CD4-positive, alpha-beta T cell (primary cell): ENCODE measurements at regions of chr1 and their contacts with region 1.

Region 1: GRCh38 chr1:67430352-67431155 is at the start of gene SERBP1:
- DNase-seq: peak; percentile 89 to 99 (median 94)
- ATAC-seq: peak; percentile 86
- H3K4me3 ChIP-seq: peak within 1 kb of the TSS; percentile 97
- H3K4me3 Mint-ChIP-seq: peak within 1 kb of the TSS; percentile 97
- H3K27ac ChIP-seq: peak within 1 kb of the TSS; percentile 97 to 98
- H3K27ac Mint-ChIP-seq: peak within 1 kb of the TSS; percentile 94
- H3K4me1 ChIP-seq: peaks cover 11% of the 10 kb centered on the region
- H3K4me1 Mint-ChIP-seq: peaks cover 59% of the 10 kb centered on the region
- H3K27me3 ChIP-seq: no peaks in the 10 kb centered on the region
- H3K27me3 Mint-ChIP-seq: no peaks in the 10 kb centered on the region
- CTCF ChIP-seq: no peak
- total RNA-seq, gene SERBP1: 128 to 135 TPM

Region 2: GRCh38 chr1:66924756-66925557 is 505.6 kb before region 1 on chr1 and contains the starts of genes DNAI4 and MIER1:
- CTCF ChIA-PET with region 1: no interaction called
- POLR2A ChIA-PET with region 1: interaction called, 15 read pairs
- intact Hi-C with region 1: loop called (anchors 2 to 5 kb)
- DNase-seq: peak; percentile 90 to 99 (median 95)
- ATAC-seq: peak; percentile 89
- H3K4me3 ChIP-seq: peak within 1 kb of the TSS; percentile 92
- H3K4me3 Mint-ChIP-seq: peak within 1 kb of the TSS; percentile 97
- H3K27ac ChIP-seq: peak within 1 kb of the TSS; percentile 95 to 99
- H3K27ac Mint-ChIP-seq: peak within 1 kb of the TSS; percentile 98
- H3K4me1 ChIP-seq: peaks cover 24% of the 10 kb centered on the region
- H3K4me1 Mint-ChIP-seq: peaks cover 67% of the 10 kb centered on the region
- H3K27me3 ChIP-seq: no peaks in the 10 kb centered on the region
- H3K27me3 Mint-ChIP-seq: no peaks in the 10 kb centered on the region
- CTCF ChIP-seq: no peak
- total RNA-seq, gene DNAI4: 5.0 to 8.8 TPM
- total RNA-seq, gene MIER1: 106 to 107 TPM

Region 3: DNA sequence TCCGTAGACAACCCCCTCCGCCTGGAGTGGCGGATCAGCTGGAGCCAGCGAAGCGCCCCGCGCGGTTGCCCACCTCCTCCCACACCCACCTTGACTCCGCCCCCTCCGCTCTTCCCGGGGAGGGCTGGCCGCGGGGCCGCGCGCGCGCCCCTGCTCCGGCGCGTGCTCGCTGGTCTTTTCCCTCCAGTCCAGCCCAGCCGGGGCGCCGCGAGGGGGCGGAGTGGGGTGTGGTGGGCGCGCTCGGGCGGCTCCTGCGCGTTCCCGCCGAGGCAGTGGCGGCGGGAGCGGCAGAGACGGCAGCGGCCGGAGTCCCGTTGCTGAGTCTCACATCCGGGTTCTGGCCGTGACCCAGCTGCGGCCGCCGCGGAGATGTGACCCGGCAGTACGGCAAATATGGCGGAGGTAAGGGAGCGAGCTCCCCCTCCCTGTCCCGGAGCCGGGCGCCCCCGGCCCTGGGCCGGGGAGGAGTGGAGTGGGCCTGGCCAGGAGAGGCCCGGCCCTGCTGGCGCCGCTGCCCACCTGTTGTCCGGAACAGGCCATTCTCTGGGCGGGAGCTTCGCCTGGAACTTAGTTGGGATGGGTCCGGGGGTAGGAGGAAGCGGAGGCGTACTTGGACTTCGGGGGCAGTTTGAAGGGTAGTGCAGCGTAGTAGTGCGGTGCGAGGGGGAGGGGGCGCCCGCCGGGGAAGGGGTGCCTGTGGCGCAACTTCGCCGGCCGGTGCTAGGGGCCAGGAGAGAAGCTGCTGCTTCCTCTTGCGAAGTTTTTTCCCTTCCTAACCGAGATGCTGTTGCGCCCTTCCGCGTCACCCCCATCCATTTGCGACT is 500.3 kb before region 1 on chr1:
- CTCF ChIA-PET with region 1: no interaction called
- POLR2A ChIA-PET with region 1: interaction called, 15 read pairs
- intact Hi-C with region 1: loop called (anchors 2 to 5 kb)
- DNase-seq: peak; percentile 88 to 98 (median 94)
- ATAC-seq: peak; percentile 66
- H3K4me3 ChIP-seq: peak overlapping the region; percentile 93
- H3K4me3 Mint-ChIP-seq: peak overlapping the region; percentile 91
- H3K27ac ChIP-seq: peak overlapping the region; percentile 87 to 88
- H3K27ac Mint-ChIP-seq: peak overlapping the region; percentile 84
- H3K4me1 ChIP-seq: peaks cover 18% of the 10 kb centered on the region
- H3K4me1 Mint-ChIP-seq: peaks cover 74% of the 10 kb centered on the region
- H3K27me3 ChIP-seq: no peaks in the 10 kb centered on the region
- H3K27me3 Mint-ChIP-seq: no peaks in the 10 kb centered on the region
- CTCF ChIP-seq: peak; percentile 52

Region 4: DNA sequence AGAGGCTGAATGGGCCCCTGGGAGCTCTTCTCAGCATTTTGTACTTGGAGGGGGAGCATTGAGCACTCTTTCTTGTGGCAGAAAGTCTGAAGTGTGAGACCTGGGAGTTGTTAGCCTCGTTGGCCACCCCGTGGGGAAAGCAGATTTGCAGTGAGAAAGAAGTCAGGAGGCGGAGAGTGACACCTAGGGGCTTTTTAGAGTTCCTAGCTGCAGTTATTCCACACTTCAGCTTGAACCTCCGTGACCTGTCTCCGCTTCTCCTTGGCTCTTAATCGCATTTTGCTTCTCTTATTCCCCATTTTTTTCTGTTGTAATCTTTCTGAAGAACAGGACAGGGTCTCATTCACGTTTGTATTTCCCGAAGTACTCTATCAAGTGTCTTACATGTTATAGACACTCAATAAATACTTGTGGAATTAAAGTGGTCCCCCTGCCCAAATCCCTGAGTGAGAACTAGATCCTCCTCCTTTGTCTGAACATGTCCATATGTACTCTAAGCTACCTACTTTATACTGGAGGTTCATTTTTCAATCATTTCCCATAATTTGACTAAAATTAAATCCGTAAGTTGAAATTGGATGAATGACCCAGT is 281.3 kb before region 1 on chr1:
- CTCF ChIA-PET with region 1: no interaction called
- POLR2A ChIA-PET with region 1: no interaction called
- intact Hi-C with region 1: loop called in 1 of 2 experiments (anchors 10 kb)
- DNase-seq: peak; percentile 32 to 83 (median 56)
- ATAC-seq: peak; percentile 93
- H3K4me3 ChIP-seq: no peak overlapping the region
- H3K4me3 Mint-ChIP-seq: no peak overlapping the region
- H3K27ac ChIP-seq: no peak overlapping the region
- H3K27ac Mint-ChIP-seq: no peak overlapping the region
- H3K4me1 ChIP-seq: peaks cover 9% of the 10 kb centered on the region
- H3K4me1 Mint-ChIP-seq: peaks cover 31% of the 10 kb centered on the region
- H3K27me3 ChIP-seq: no peaks in the 10 kb centered on the region
- H3K27me3 Mint-ChIP-seq: no peaks in the 10 kb centered on the region
- CTCF ChIP-seq: peak; percentile 85

Region 5: GRCh38 chr1:67407498-67407897 is 23.1 kb before region 1 on chr1:
- CTCF ChIA-PET with region 1: no interaction called
- POLR2A ChIA-PET with region 1: interaction called, 6 read pairs
- intact Hi-C with region 1: loop called in 1 of 2 experiments (anchors 2 kb)
- DNase-seq: no peak
- ATAC-seq: no peak
- H3K4me3 ChIP-seq: no peak overlapping the region
- H3K4me3 Mint-ChIP-seq: no peak overlapping the region
- H3K27ac ChIP-seq: no peak overlapping the region
- H3K27ac Mint-ChIP-seq: peak overlapping the region; percentile 25
- H3K4me1 ChIP-seq: no peaks in the 10 kb centered on the region
- H3K4me1 Mint-ChIP-seq: peaks cover 20% of the 10 kb centered on the region
- H3K27me3 ChIP-seq: no peaks in the 10 kb centered on the region
- H3K27me3 Mint-ChIP-seq: no peaks in the 10 kb centered on the region
- CTCF ChIP-seq: no peak

Region 6: GRCh38 chr1:67418839-67419586 is 11.5 kb before region 1 on chr1:
- CTCF ChIA-PET with region 1: no interaction called
- POLR2A ChIA-PET with region 1: interaction called, 24 read pairs
- intact Hi-C with region 1: no loop called
- DNase-seq: no peak
- ATAC-seq: no peak
- H3K4me3 ChIP-seq: no peak overlapping the region
- H3K4me3 Mint-ChIP-seq: no peak overlapping the region
- H3K27ac ChIP-seq: no peak overlapping the region
- H3K27ac Mint-ChIP-seq: peak overlapping the region; percentile 60
- H3K4me1 ChIP-seq: peaks cover 19% of the 10 kb centered on the region
- H3K4me1 Mint-ChIP-seq: peaks cover 65% of the 10 kb centered on the region
- H3K27me3 ChIP-seq: no peaks in the 10 kb centered on the region
- H3K27me3 Mint-ChIP-seq: no peaks in the 10 kb centered on the region
- CTCF ChIP-seq: no peak